Spleen (tissue), 13 donors: ENCODE measurements at regions of chr9 and their contacts with region 1.

Region 1: DNA sequence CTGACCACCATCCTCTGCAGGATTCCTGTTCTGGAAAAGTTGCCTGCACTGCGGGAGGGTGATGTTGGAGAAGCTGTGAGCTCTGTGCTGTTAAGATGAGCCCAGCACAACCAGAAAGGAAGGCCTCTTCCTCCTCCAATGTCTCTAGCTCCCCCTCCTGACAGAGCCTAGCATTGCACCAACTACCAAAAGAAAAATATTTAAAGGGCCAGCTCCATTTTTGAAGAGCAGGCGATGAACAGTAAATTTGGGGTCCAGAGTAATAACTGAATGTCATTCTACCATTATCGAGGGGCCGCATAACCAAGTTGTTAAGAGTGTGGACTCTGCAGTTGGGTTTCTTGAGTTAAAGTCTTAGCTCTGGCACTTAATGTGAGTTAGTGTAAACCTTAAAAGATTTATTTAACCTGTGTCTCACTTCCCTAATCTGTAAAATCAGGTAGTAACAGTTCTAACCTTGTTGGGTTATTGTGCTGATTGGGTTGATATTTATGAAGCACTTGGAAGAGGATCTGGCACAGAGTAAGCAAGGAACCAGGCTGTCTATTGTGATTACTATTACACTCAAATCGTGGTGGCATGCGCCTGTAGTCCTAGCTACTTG is 3.9 kb downstream of the TEX53 start:
- DNase-seq: no peak
- H3K4me3 ChIP-seq: no peak overlapping the region
- H3K27ac ChIP-seq: no peak overlapping the region
- H3K4me1 ChIP-seq: peaks cover 0 to 20% (median 10%) of the 10 kb centered on the region in 6 donors
- H3K27me3 ChIP-seq: no peaks in the 10 kb centered on the region
- CTCF ChIP-seq: peak; percentile 69 to 93 (median 88)
- POLR2A ChIP-seq: no peak

Region 2: DNA sequence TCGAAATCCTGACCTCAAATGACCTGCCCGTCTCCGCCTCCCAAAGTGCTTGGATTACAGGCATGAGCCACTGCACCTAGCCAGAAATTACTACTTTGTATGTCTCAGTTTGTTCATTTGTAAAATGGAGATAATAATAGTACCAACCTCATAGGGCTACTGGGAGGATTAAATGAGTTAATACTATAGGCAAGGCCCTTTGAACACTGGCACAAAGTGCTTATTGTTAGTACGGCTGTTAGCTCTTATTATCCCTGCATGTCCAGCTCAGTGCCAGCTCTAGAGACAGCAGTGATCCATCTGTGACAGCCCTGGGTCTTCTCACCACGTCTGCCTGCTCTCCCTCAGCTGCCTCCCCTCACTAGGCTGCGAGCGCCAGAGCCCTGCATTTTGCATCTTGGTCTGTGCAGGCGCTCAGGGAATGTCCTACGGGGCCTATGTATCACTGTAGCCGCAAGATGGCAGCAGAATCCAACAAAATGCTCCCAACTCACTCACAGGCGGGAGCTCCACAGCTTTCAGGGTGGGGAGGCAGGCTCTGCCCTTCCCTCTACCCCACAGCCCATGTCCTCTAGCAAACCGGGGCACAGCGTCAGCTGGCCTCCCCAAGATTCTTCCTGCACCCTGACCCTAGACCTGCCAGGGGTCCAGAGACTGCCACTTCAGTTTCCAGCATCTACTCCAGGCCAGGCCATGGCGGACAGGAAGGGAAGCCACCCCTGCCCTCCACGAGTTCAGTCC is 248.2 kb before region 1 on chr9:
- intact Hi-C with region 1: loop called (anchors 2 kb)
- DNase-seq: peak; percentile 91
- H3K4me3 ChIP-seq: no peak overlapping the region
- H3K27ac ChIP-seq: no peak overlapping the region
- H3K4me1 ChIP-seq: peaks cover 0 to 9% (median 7%) of the 10 kb centered on the region in 6 donors
- H3K27me3 ChIP-seq: no peaks in the 10 kb centered on the region
- CTCF ChIP-seq: peak; percentile 81 to 97 (median 90)
- POLR2A ChIP-seq: no peak

Region 3: GRCh38 chr9:114434878-114435311 is 218.8 kb before region 1 on chr9:
- intact Hi-C with region 1: loop called (anchors 10 kb)
- DNase-seq: no peak
- H3K4me3 ChIP-seq: no peak overlapping the region
- H3K27ac ChIP-seq: no peak overlapping the region
- H3K4me1 ChIP-seq: peaks cover 0 to 21% (median 10%) of the 10 kb centered on the region in 6 donors
- H3K27me3 ChIP-seq: no peaks in the 10 kb centered on the region
- CTCF ChIP-seq: peak in 10 of 11 experiments; percentile 30 to 76 (median 52)
- POLR2A ChIP-seq: no peak

Region 4: GRCh38 chr9:114487607-114488300 is 165.9 kb before region 1 on chr9:
- intact Hi-C with region 1: loop called (anchors 2 kb)
- DNase-seq: peak; percentile 73
- H3K4me3 ChIP-seq: no peak overlapping the region
- H3K27ac ChIP-seq: peak overlapping the region in 1 of 8 donors; percentile 3
- H3K4me1 ChIP-seq: peaks cover 4 to 52% (median 18%) of the 10 kb centered on the region in 6 donors
- H3K27me3 ChIP-seq: no peaks in the 10 kb centered on the region
- CTCF ChIP-seq: peak; percentile 77 to 94 (median 89)
- POLR2A ChIP-seq: no peak